Right ventricle myocardium superior (tissue), 1 donor: ENCODE measurements at regions of chr3 and their contacts with region 1.

Region 1: DNA sequence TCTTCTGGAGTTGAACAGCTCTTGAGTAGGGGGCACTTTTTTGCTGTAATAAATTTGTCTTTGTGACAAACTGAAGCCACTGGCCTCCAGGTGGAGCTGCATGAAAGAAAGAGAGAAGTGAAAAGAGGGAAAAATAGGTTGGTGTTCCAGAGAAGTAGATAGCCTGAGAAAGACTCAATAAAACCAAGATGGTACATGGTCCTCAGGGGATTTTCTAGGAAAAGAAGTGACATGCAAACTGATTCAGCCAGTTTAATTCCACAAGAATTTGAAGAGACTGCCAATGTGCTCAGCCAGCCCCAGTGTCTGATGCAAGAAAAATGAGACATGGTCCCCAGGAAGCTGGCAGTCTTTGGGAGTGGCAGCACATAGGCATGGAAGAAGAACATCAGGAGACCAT is 152.7 kb downstream of the CD47 start:
- DNase-seq: peak; percentile 50
- ATAC-seq: peak; percentile 68

Region 2: DNA sequence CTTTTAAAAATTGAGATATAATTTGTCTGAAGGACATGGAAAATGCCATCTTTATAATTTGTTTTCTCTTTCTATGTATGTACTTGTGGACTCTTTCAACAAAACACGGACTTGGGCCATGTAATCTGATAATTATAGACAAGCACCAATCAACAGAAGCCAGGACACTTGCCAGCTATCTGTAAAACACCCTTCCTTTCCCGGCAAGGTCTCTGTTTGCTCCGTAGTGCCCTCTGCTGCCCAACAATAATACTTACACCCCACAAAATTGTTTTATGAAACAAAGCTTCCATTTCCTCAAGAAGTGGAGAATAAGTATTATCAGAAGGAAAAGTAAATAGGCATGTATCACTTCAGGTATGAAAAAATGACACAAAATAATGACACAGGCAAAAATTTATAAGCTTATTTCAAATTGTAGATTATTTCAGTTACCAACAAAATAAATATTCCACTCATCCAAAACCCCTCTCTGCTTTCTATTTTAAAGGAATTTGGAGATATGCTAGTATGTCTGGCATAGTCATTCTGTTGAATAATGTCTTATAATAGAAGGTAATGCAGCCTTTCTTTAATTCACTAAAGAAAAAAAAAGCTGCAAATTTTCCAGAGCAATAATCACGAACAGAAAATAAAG is 539.5 kb after region 1 on chr3:
- intact Hi-C with region 1: loop called (anchors 10 kb)
- DNase-seq: no peak
- ATAC-seq: peak; percentile 68